ENCODE measurements at regions of chrX and their contacts with region 1.

Region 1: GRCh38 chrX:47644557-47645091 is 5.7 kb downstream of the ELK1 start:
- DNase-seq: no peak
- ATAC-seq: peak; percentile 60 to 81 (median 66)
- H3K4me3 ChIP-seq: no peak overlapping the region
- H3K27ac ChIP-seq: peak overlapping the region in 1 of 12 donors; percentile 10
- H3K4me1 ChIP-seq: peaks cover 0 to 17% (median 7%) of the 10 kb centered on the region in 12 donors
- H3K27me3 ChIP-seq: peaks cover 0 to 4% (median 0%) of the 10 kb centered on the region in 9 donors
- CTCF ChIP-seq: peak in 10 of 12 donors; percentile 10 to 45 (median 32)
- POLR2A ChIP-seq: no peak

Region 2: DNA sequence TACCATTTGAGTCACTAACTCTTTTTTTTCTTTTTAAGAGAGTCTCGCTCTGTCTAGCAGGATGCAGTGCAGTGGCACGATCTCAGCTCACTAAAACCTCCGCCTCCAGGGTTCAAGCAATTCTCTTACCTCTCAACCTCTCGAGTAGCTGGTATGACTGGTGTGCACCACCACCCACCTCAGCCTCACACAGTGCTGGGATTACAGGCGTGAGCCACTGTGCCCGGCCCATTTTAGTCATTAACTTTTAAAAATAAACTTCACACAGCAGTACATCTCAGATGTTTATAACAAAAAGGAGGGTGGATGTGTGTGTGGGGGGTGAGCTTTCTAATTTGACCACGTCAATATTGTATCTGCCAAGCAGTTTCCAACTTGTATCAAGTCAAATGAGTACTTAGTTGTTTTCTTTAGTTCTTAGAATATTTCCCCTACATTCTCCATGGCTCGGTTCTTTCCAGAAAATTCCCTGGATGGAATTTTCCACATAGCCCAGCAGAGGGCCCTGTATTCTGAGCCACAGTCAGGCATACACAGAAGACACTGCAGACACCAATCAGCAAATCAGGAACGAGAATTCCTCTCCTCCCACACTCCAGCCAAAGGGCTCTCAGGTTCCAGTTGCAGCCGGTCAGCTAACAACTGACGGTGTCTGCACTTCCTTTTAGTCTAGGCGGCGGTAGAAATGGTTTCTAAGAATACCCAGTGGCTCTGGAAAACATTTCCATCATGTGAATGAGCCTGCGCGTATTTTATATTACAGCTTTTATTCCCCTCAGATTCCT is 103.7 kb before region 1 on chrX:
- intact Hi-C with region 1: loop called in 3 of 10 experiments (anchors 5 kb)
- DNase-seq: peak; percentile 63 to 86 (median 82)
- ATAC-seq: peak; percentile 98 to 99 (median 98)
- H3K4me3 ChIP-seq: no peak overlapping the region
- H3K27ac ChIP-seq: peak overlapping the region; percentile 32 to 87 (median 74)
- H3K4me1 ChIP-seq: peaks cover 0 to 20% (median 0%) of the 10 kb centered on the region in 12 donors
- H3K27me3 ChIP-seq: no peaks in the 10 kb centered on the region
- CTCF ChIP-seq: peak; percentile 24 to 72 (median 58)
- POLR2A ChIP-seq: peak in 1 of 2 donors; percentile 38